K562 (cell line): ENCODE measurements at regions of chr17 and their contacts with region 1.

Region 1: GRCh38 chr17:42067351-42068091 is 17.1 kb upstream of the C17orf113 start:
- DNase-seq: peak; percentile 72 to 78 (median 76)
- ATAC-seq: peak; percentile 88
- H3K4me3 ChIP-seq: no peak overlapping the region
- H3K27ac ChIP-seq: no peak overlapping the region
- H3K4me1 ChIP-seq: peaks cover 0 to 19% of the 10 kb centered on the region in 2 experiments; a peak in 3 of 5 replicates
- H3K27me3 ChIP-seq: peaks cover 5 to 22% of the 10 kb centered on the region in 2 experiments; a peak in 4 of 5 replicates
- CTCF ChIP-seq: peak; percentile 81 to 97 (median 87)
- EP300 ChIP-seq: no peak
- POLR2A ChIP-seq: no peak
- RAD21 ChIP-seq: peak; percentile 68 to 83

Region 2: GRCh38 chr17:41925991-41926590 is 141.4 kb before region 1 on chr17:
- CTCF ChIA-PET with region 1: no interaction called
- POLR2A ChIA-PET with region 1: no interaction called
- in situ Hi-C with region 1: no loop called
- intact Hi-C with region 1: no loop called
- DNase-seq: no peak
- ATAC-seq: no peak
- H3K4me3 ChIP-seq: no peak overlapping the region
- H3K27ac ChIP-seq: no peak overlapping the region
- H3K4me1 ChIP-seq: peaks cover 5 to 9% of the 10 kb centered on the region in 2 experiments; a peak in 4 of 5 replicates
- H3K27me3 ChIP-seq: no peaks in the 10 kb centered on the region
- CTCF ChIP-seq: no peak
- EP300 ChIP-seq: no peak
- POLR2A ChIP-seq: no peak
- RAD21 ChIP-seq: no peak

Region 3: GRCh38 chr17:42101513-42102319 is 34.2 kb after region 1 on chr17:
- CTCF ChIA-PET with region 1: interaction called, 33 read pairs
- POLR2A ChIA-PET with region 1: no interaction called
- in situ Hi-C with region 1: no loop called
- intact Hi-C with region 1: loop called (anchors 1 kb)
- DNase-seq: peak; percentile 87 to 89 (median 87)
- ATAC-seq: peak; percentile 93
- H3K4me3 ChIP-seq: no peak overlapping the region
- H3K27ac ChIP-seq: no peak overlapping the region
- H3K4me1 ChIP-seq: peaks cover 7 to 27% of the 10 kb centered on the region in 2 experiments; a peak in 3 of 5 replicates
- H3K27me3 ChIP-seq: peaks cover 0 to 12% of the 10 kb centered on the region in 2 experiments; a peak in 3 of 5 replicates
- CTCF ChIP-seq: peak; percentile 92 to 98 (median 94)
- EP300 ChIP-seq: no peak
- POLR2A ChIP-seq: no peak
- RAD21 ChIP-seq: peak; percentile 85 to 92

Region 4: GRCh38 chr17:42112552-42113176 is 45.1 kb after region 1 on chr17 and contains the start of gene DHX58:
- CTCF ChIA-PET with region 1: interaction called, 29 read pairs
- POLR2A ChIA-PET with region 1: no interaction called
- in situ Hi-C with region 1: no loop called
- intact Hi-C with region 1: loop called (anchors 1 kb)
- DNase-seq: peak; percentile 42 to 71 (median 56)
- ATAC-seq: peak; percentile 72
- H3K4me3 ChIP-seq: no peak within 1 kb of the TSS
- H3K27ac ChIP-seq: peak within 1 kb of the TSS; percentile 53; the same call in 2 of the 3 replicates
- H3K4me1 ChIP-seq: peaks cover 12 to 59% of the 10 kb centered on the region in 2 experiments; a peak in 4 of 5 replicates
- H3K27me3 ChIP-seq: no peaks in the 10 kb centered on the region
- CTCF ChIP-seq: no peak
- EP300 ChIP-seq: no peak
- POLR2A ChIP-seq: peak; percentile 45; the same call in 1 of the 2 replicates
- RAD21 ChIP-seq: no peak
- polyA plus RNA-seq, gene DHX58: 0.15 to 0.25 TPM

Region 5: DNA sequence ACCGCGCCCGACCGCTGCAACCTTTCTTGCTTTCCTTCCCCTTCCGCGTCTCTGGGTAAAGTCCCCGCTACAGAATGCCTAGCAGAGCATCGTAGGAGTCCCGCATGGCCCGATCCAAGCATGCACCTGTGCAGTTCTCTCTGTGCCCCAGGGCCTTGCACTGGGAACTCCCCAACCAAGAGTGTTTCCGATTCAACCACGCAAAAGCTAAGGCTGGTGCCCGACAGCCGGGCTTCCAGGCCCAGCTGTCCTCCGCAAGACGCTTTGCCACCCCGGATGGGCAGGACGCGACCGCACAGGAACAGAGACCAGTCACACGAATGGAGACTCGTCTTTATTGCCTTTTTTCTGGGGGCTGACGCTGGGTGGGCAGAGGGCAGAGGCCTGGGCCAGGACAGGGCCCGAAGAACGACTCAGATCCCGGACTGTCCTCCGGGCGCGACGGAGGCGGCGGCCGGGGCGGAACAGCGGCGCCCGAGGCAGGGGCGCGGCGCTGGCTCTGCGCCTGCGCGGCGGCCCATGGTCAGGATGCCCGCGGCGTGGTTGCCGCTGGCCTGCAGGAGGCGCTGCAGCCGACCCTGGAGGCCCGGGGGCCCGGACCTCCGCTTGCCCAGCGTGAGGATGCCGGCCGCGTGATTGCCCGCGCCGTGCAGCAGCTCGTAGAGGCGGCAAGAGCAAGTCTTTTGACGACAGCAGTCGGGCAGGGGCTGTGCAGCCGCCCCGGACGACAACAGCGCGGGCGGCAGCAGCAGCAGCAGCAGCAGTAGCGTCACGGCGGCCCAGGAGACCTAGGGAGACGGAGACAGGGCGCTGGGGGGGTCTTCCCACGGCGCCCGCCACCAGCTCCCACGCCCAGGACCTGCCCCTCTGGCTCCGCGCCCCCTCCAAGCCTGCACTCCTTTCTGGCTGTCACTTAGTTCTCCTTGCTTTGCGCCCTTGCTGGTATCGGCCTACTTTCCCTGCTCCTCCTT is 116.5 kb after region 1 on chr17:
- CTCF ChIA-PET with region 1: interaction called, 3 read pairs
- POLR2A ChIA-PET with region 1: interaction called, 4 read pairs
- in situ Hi-C with region 1: no loop called
- intact Hi-C with region 1: loop called (anchors 1 kb)
- DNase-seq: peak; percentile 91 to 98 (median 96)
- ATAC-seq: peak; percentile 81
- H3K4me3 ChIP-seq: peak overlapping the region; percentile 65
- H3K27ac ChIP-seq: peak overlapping the region; percentile 66
- H3K4me1 ChIP-seq: peaks cover 31 to 47% of the 10 kb centered on the region in 2 experiments
- H3K27me3 ChIP-seq: no peaks in the 10 kb centered on the region
- CTCF ChIP-seq: peak; percentile 78 to 92 (median 91)
- EP300 ChIP-seq: no peak
- POLR2A ChIP-seq: peak; percentile 56; the same call in 1 of the 2 replicates
- RAD21 ChIP-seq: peak; percentile 49 to 61; a peak in 3 of 4 replicates